ENCODE measurements at regions of chr6 and their contacts with region 1.

Region 1: DNA sequence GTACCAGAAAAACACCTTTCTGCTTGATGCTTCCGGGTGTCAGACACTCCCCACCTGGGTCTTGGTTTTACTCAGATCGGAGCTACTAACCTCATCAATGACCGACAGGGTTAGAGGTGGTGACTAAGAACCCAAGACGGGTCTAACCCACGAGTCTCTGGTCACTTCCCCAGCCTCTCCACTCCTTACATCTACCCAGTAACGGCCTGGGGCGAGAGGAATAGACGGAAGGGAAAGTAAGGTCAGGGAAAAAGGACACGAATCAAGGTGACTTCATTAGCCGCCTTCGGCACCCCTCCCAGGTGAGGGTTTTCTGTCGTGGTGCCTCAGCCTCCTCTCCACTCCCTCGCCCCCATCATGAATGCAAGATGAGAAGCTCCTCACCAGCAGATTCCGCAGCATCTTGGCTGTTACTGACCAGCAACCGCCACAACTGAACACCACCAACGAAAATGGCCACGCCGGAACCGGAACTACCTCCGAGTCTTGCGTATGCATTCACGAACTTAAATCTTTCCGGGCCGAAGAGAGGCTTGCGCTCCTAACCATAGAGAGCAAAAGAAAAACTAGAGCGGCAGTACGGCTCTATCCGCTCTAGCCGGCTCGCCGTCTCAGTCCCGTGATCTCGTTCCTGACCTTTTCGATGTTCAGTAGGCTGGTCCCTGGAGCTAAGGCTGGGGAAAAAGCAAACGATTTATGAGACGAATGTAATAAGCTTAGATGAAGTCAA is at the start of gene COX7A2:
- DNase-seq: peak; percentile 70 to 96
- H3K4me3 ChIP-seq: peak within 1 kb of the TSS; percentile 81
- H3K27ac ChIP-seq: peak within 1 kb of the TSS; percentile 85 to 87
- H3K4me1 ChIP-seq: peaks cover 0 to 12% of the 10 kb centered on the region in 2 donors
- H3K27me3 ChIP-seq: no peaks in the 10 kb centered on the region
- CTCF ChIP-seq: no peak
- total RNA-seq, gene COX7A2: 360 TPM

Region 2: GRCh38 chr6:75130784-75131183 is 112.7 kb before region 1 on chr6:
- intact Hi-C with region 1: no loop called
- DNase-seq: no peak
- H3K4me3 ChIP-seq: no peak overlapping the region
- H3K27ac ChIP-seq: no peak overlapping the region
- H3K4me1 ChIP-seq: no peaks in the 10 kb centered on the region
- H3K27me3 ChIP-seq: no peaks in the 10 kb centered on the region
- CTCF ChIP-seq: no peak

Region 3: GRCh38 chr6:75284632-75285286 is 41.3 kb after region 1 on chr6 and contains the start of gene TMEM30A:
- intact Hi-C with region 1: loop called (anchors 1 kb)
- DNase-seq: peak; percentile 88 to 98
- H3K4me3 ChIP-seq: peak within 1 kb of the TSS; percentile 93 to 97
- H3K27ac ChIP-seq: peak within 1 kb of the TSS; percentile 85 to 95
- H3K4me1 ChIP-seq: peaks cover 3 to 17% of the 10 kb centered on the region in 2 donors
- H3K27me3 ChIP-seq: no peaks in the 10 kb centered on the region
- CTCF ChIP-seq: no peak
- total RNA-seq, gene TMEM30A: 54.8 TPM

Region 4: DNA sequence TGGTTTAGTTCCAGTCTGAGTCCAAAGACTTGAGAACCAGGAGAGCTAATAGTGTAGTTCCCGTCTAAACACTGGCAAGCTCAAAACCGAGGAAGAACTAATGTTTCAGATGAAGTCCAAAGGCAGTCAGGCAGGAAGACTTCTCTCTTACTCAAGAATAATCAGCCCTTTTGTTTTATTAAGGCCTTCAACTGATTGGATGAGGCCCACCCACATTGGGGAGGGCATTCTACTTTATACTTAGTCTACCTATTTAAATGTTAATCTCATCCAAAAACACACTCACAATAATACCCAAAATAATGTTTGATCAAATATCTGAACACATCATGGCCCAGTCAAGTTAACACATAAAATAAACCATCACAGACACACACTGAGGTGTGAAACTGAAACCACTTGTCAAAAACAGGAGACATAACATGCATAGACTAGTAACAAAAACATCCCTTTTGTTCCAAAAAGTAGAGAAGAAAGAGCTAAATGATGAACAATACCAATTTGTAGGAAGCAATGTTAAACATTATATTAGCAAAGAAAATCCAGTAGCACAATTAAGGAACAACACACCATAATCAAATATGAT is 308.0 kb after region 1 on chr6:
- intact Hi-C with region 1: no loop called
- DNase-seq: no peak
- H3K4me3 ChIP-seq: no peak overlapping the region
- H3K27ac ChIP-seq: no peak overlapping the region
- H3K4me1 ChIP-seq: no peaks in the 10 kb centered on the region
- H3K27me3 ChIP-seq: no peaks in the 10 kb centered on the region
- CTCF ChIP-seq: no peak

Measured in ascending aorta (tissue), 2 donors.